Uterus (tissue), 4 donors: ENCODE measurements at regions of chr17 and their contacts with region 1.

Region 1: GRCh38 chr17:34892461-34893249 is 68.6 kb downstream of the CCT6B start:
- DNase-seq: no peak
- H3K4me3 ChIP-seq: no peak overlapping the region
- H3K27ac ChIP-seq: no peak overlapping the region
- H3K4me1 ChIP-seq: no peaks in the 10 kb centered on the region
- H3K27me3 ChIP-seq: no peaks in the 10 kb centered on the region
- CTCF ChIP-seq: no peak
- POLR2A ChIP-seq: no peak

Region 2: DNA sequence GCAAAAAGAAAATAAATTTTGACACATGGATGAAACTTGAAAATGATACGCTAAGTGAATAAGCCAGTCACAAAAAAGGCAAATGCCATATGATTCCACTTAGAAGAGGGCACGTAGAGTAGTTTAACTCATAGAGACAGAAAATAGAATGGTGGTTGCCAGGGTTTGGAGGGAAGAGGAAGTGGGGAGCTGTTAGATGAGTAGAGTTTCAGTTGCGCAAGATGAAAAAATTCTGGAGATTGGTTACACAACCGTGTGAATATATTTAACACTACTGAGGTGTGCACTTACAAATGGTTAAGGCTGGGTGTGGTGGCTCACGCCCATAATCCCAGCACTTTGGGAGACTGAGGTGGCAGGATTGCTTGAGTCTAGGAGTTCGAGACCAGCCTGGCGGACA is 406.7 kb before region 1 on chr17:
- intact Hi-C with region 1: no loop called
- DNase-seq: no peak
- H3K4me3 ChIP-seq: no peak overlapping the region
- H3K27ac ChIP-seq: no peak overlapping the region
- H3K4me1 ChIP-seq: no peaks in the 10 kb centered on the region
- H3K27me3 ChIP-seq: no peaks in the 10 kb centered on the region
- CTCF ChIP-seq: no peak
- POLR2A ChIP-seq: no peak

Region 3: GRCh38 chr17:34837876-34838478 is 54.7 kb before region 1 on chr17:
- intact Hi-C with region 1: loop called (anchors 10 kb)
- DNase-seq: no peak
- H3K4me3 ChIP-seq: no peak overlapping the region
- H3K27ac ChIP-seq: no peak overlapping the region
- H3K4me1 ChIP-seq: no peaks in the 10 kb centered on the region
- H3K27me3 ChIP-seq: no peaks in the 10 kb centered on the region
- CTCF ChIP-seq: no peak
- POLR2A ChIP-seq: no peak

Region 4: GRCh38 chr17:36837195-36837938 is 1944.7 kb after region 1 on chr17:
- intact Hi-C with region 1: loop called (anchors 10 kb)
- DNase-seq: no peak
- H3K4me3 ChIP-seq: no peak overlapping the region
- H3K27ac ChIP-seq: no peak overlapping the region
- H3K4me1 ChIP-seq: no peaks in the 10 kb centered on the region
- H3K27me3 ChIP-seq: no peaks in the 10 kb centered on the region
- CTCF ChIP-seq: no peak
- POLR2A ChIP-seq: no peak